ENCODE measurements at regions of chr1 and their contacts with region 1.

Region 1: GRCh38 chr1:86470859-86471258 is 2.1 kb downstream of the CLCA1 start:
- DNase-seq: peak; percentile 28
- CTCF ChIP-seq: no peak

Region 2: DNA sequence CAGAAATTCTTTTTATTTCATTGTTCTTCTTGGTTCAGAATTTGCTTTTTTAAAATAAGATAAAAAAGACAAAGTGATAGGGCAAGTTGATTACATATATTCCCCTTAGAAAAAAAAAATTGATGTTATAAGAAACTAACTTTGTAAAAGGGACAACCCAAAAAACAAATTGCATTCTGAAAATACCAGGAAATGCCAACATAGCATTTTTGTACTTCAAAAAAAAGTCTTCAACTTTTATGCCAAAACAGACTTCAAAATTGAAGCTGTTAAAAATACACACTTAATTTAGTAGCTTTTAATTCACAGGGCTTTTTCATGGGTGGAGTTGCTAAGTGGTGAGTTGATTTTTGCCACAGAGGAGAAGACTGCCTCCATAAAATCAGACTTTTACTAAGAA is 145.6 kb before region 1 on chr1:
- CTCF ChIA-PET with region 1: no interaction called
- POLR2A ChIA-PET with region 1: no interaction called
- DNase-seq: no peak
- CTCF ChIP-seq: no peak

Region 3: DNA sequence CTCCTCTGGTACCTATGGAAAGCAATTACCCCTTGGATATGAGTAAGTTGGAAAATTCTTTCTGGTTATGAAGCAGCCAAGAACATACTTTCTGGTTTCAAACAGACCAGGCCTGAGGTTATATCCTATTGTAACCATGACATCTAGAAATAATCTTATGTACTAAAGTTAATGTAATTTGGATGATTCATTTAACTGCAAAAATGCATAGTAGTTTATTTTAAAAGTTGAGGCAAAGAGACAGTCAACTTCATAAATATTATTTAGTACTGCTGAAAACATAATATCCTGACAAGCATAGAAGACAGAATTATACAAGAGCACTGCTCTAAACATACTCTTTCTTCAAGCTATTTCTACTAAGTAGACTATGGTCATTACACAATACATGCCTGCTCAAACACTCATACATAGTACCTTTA is 100.2 kb before region 1 on chr1:
- CTCF ChIA-PET with region 1: no interaction called
- POLR2A ChIA-PET with region 1: no interaction called
- DNase-seq: no peak
- CTCF ChIP-seq: no peak

Region 4: GRCh38 chr1:86441581-86441980 is 29.3 kb before region 1 on chr1:
- CTCF ChIA-PET with region 1: interaction called, 10 read pairs
- POLR2A ChIA-PET with region 1: no interaction called
- DNase-seq: no peak
- CTCF ChIP-seq: no peak

Region 5: GRCh38 chr1:86487131-86487810 is 16.4 kb after region 1 on chr1:
- CTCF ChIA-PET with region 1: interaction called, 23 read pairs
- POLR2A ChIA-PET with region 1: no interaction called
- DNase-seq: no peak
- CTCF ChIP-seq: no peak

Region 6: GRCh38 chr1:86507935-86508582 is 37.2 kb after region 1 on chr1:
- CTCF ChIA-PET with region 1: interaction called, 41 read pairs
- POLR2A ChIA-PET with region 1: no interaction called
- DNase-seq: no peak
- CTCF ChIP-seq: peak; percentile 23